Activated naive CD4-positive, alpha-beta T cell treated with anti-CD3 and anti-CD28 coated beads, Interleukin-2, amount 10 ng/mL, durations not matched to agents 7 days and 5 days (primary cell): ENCODE measurements at regions of chr14 and their contacts with region 1.

Region 1: GRCh38 chr14:81170104-81170828 is 50.5 kb downstream of the GTF2A1 start:
- DNase-seq: peak; percentile 92
- H3K4me3 Mint-ChIP-seq: peak overlapping the region; percentile 90
- H3K27ac Mint-ChIP-seq: peak overlapping the region; percentile 97
- H3K4me1 Mint-ChIP-seq: peaks cover 52% of the 10 kb centered on the region
- H3K27me3 Mint-ChIP-seq: no peaks in the 10 kb centered on the region

Region 2: GRCh38 chr14:80942183-80942600 is 228.1 kb before region 1 on chr14:
- CTCF ChIA-PET with region 1: interaction called, 11 read pairs
- DNase-seq: no peak
- H3K4me3 Mint-ChIP-seq: peak overlapping the region; percentile 84
- H3K27ac Mint-ChIP-seq: peak overlapping the region; percentile 92
- H3K4me1 Mint-ChIP-seq: peaks cover 38% of the 10 kb centered on the region
- H3K27me3 Mint-ChIP-seq: no peaks in the 10 kb centered on the region

Region 3: DNA sequence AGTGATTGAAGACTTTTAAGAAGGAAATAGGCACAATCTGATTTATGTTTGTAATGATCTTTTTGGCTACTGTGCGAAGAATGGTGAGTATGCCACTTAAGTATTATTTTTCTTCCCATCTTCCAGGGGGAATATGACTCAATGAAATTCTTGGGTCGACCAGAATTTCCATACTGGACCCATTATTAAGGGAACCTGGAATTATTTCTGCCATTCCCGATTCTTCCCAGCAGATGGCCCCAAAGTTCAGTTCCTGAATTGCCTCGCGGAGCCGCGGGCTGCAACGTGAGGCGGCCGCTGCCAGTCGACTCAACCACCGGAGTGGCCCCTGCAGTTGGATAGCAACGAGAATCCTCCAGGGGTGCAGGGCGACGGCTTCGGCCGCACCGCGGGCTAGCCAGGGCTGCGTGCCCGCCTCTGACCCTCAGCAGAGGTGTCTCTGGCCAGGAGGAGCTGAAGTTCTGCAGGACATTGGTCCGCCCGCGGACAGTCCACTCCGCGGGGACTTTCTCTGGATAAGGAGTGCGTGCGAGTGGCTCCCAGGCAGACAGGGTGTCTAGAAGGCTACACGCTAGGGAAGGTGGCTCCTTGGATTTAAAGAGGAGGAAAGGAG is 215.5 kb before region 1 on chr14:
- CTCF ChIA-PET with region 1: interaction called, 14 read pairs
- DNase-seq: peak; percentile 83
- H3K4me3 Mint-ChIP-seq: peak overlapping the region; percentile 90
- H3K27ac Mint-ChIP-seq: peak overlapping the region; percentile 93
- H3K4me1 Mint-ChIP-seq: peaks cover 52% of the 10 kb centered on the region
- H3K27me3 Mint-ChIP-seq: peaks cover 15% of the 10 kb centered on the region

Region 4: GRCh38 chr14:80987235-80988032 is 182.8 kb before region 1 on chr14:
- CTCF ChIA-PET with region 1: interaction called, 15 read pairs
- DNase-seq: peak; percentile 79
- H3K4me3 Mint-ChIP-seq: no peak overlapping the region
- H3K27ac Mint-ChIP-seq: no peak overlapping the region
- H3K4me1 Mint-ChIP-seq: peaks cover 14% of the 10 kb centered on the region
- H3K27me3 Mint-ChIP-seq: peaks cover under 1% of the 10 kb centered on the region

Region 5: DNA sequence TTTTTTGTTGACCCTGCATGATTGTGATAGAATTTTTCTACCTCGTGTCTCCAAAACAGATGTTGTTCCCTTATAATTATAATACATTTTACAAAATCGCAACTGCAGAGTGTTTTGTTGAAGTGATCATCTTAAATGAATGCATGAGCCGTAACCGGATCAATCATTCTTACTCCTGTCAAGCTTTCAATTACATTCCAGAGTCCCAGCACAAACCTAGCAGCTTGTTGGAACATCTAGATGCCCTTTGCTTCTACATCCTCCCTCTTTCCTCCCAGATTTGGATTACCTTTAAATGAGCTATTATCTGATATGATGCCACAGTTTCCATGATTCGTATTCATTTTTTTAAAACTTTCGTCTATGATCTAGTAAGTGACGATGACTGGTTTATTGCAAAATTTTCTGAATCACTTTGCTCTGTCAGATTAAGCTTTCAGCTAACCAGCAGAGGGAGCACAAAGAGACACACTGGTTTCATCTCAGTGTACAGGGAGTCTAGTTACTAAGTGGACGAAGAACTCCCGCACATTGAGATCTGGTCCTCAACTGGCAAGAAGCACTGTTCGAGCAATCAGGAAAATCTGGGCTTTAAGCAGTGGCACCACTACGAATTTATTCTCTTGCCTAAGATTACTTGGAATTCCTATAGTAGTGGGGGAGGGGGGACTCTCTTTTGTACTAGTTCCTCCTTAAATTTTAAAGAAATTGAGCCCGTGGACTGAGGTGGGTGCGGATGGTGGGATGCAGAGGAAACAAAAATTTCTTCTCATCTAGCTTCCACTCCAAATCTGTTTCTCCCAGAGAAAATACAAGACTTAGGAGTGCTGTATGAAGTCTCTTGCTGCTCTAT is 174.0 kb before region 1 on chr14:
- CTCF ChIA-PET with region 1: interaction called, 32 read pairs
- DNase-seq: peak; percentile 38
- H3K4me3 Mint-ChIP-seq: no peak overlapping the region
- H3K27ac Mint-ChIP-seq: no peak overlapping the region
- H3K4me1 Mint-ChIP-seq: peaks cover 6% of the 10 kb centered on the region
- H3K27me3 Mint-ChIP-seq: peaks cover 18% of the 10 kb centered on the region

Region 6: DNA sequence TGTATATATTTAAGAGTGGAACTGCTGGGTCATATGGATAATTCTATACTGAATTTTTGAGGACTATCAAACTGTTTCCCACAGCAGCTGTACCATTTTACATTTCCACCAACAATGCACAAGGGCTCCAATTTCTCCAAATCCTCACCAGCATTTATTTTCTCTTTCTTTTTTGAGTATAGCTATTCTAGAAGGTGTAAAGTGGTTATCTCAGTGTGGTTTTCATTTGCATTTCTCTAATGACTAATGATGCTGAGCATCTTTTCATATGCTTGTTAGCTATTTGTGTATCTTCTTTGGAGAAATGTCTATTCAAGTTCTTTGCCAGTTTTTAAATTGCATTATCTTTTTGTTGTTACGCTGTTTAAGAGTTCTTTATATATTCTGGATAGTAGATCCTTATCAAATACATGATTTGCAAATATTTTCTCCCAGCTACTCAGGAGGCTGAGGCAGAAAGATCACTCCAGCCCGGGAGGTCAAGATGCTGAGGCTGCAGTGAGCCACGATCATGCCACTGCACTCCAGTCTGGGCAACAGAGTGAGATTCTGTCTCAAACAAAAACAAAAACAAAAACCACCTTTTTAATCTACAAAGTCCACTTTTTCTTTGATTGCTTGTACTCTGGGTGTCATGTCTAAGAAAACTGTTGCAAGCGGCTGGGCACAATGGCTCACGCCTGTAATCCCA is 17.7 kb after region 1 on chr14:
- CTCF ChIA-PET with region 1: interaction called, 12 read pairs
- DNase-seq: no peak
- H3K4me3 Mint-ChIP-seq: no peak overlapping the region
- H3K27ac Mint-ChIP-seq: peak overlapping the region; percentile 72
- H3K4me1 Mint-ChIP-seq: peaks cover 61% of the 10 kb centered on the region
- H3K27me3 Mint-ChIP-seq: no peaks in the 10 kb centered on the region

Region 7: DNA sequence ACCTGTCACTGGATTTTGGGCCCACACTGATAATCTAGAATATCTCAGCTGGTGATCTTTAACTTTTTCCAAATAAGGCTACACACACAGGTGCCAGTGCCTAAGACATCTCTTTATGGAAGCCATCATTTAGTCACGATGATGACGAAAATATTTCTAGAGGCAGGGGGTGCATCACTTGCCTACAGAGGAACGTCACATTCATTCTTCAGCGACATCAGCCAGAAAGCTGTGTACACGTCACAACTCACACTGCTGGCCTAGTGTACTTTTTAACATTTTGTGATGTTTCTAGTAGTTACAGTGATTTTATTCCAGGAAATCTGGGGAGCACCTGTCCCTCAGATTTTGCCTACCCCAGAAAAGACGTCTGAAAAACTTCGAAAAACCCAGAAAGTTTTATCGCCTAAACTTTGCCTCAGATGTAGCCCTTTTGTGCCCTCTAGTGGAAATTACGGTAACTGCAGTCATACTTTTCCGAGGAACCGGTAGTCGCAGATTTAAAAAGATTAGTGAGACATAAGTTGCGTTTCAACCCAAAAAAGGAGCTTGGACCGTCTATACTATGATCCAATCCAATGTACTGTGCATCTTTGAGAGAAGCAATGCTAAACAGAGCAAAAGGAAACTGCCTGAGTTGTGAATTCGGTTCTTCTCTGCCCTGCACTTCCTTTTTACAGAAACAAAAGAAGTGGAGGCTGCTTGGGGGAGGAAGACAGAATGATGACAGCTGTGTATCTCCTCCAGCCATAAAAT is 294.2 kb after region 1 on chr14:
- CTCF ChIA-PET with region 1: interaction called, 11 read pairs
- DNase-seq: peak; percentile 72
- H3K4me3 Mint-ChIP-seq: peak overlapping the region; percentile 72
- H3K27ac Mint-ChIP-seq: peak overlapping the region; percentile 93
- H3K4me1 Mint-ChIP-seq: peaks cover 18% of the 10 kb centered on the region
- H3K27me3 Mint-ChIP-seq: peaks cover 3% of the 10 kb centered on the region

Region 8: GRCh38 chr14:81550001-81550637 is 379.9 kb after region 1 on chr14:
- CTCF ChIA-PET with region 1: no interaction called
- DNase-seq: no peak
- H3K4me3 Mint-ChIP-seq: no peak overlapping the region
- H3K27ac Mint-ChIP-seq: no peak overlapping the region
- H3K4me1 Mint-ChIP-seq: peaks cover 14% of the 10 kb centered on the region
- H3K27me3 Mint-ChIP-seq: no peaks in the 10 kb centered on the region